CD8-positive, alpha-beta T cell (primary cell): ENCODE measurements at regions of chr3 and their contacts with region 1.

Region 1: DNA sequence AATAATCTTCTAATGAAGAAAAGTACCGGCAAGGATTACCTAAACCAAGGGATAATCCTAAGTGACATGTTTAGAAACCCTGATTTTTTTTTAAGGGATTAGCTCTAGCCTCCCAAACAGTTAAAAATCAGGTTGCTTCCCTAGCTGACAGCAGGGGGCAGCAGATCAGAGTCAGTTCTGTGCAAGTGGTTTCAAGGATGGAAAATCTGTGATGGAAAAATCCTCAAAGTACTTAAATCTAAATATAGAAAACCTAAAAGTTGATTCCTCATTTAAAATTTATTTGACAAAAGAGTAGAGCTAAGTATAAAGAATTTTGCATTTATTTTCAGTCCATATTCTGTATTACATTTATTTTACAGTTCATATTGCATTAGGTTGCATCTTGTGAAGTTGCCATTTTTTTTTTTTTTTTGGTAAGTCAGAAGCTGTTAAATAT is 107.6 kb downstream of the PEX5L start:
- DNase-seq: peak in 6 of 9 experiments; percentile 11 to 54 (median 41)
- ATAC-seq: no peak
- H3K4me3 ChIP-seq: no peak overlapping the region
- H3K4me3 Mint-ChIP-seq: no peak overlapping the region
- H3K27ac ChIP-seq: no peak overlapping the region
- H3K27ac Mint-ChIP-seq: no peak overlapping the region
- H3K4me1 ChIP-seq: no peaks in the 10 kb centered on the region
- H3K4me1 Mint-ChIP-seq: peaks cover 3% of the 10 kb centered on the region
- H3K27me3 ChIP-seq: no peaks in the 10 kb centered on the region
- H3K27me3 Mint-ChIP-seq: peaks cover 3% of the 10 kb centered on the region
- CTCF ChIP-seq: peak; percentile 61

Region 2: GRCh38 chr3:179898024-179898423 is 31.1 kb before region 1 on chr3:
- CTCF ChIA-PET with region 1: interaction called, 10 read pairs
- POLR2A ChIA-PET with region 1: no interaction called
- intact Hi-C with region 1: no loop called
- DNase-seq: peak in 2 of 9 experiments; percentile 14 to 45
- ATAC-seq: no peak
- H3K4me3 ChIP-seq: no peak overlapping the region
- H3K4me3 Mint-ChIP-seq: no peak overlapping the region
- H3K27ac ChIP-seq: no peak overlapping the region
- H3K27ac Mint-ChIP-seq: no peak overlapping the region
- H3K4me1 ChIP-seq: no peaks in the 10 kb centered on the region
- H3K4me1 Mint-ChIP-seq: no peaks in the 10 kb centered on the region
- H3K27me3 ChIP-seq: no peaks in the 10 kb centered on the region
- H3K27me3 Mint-ChIP-seq: peaks cover 10% of the 10 kb centered on the region
- CTCF ChIP-seq: no peak

Region 3: DNA sequence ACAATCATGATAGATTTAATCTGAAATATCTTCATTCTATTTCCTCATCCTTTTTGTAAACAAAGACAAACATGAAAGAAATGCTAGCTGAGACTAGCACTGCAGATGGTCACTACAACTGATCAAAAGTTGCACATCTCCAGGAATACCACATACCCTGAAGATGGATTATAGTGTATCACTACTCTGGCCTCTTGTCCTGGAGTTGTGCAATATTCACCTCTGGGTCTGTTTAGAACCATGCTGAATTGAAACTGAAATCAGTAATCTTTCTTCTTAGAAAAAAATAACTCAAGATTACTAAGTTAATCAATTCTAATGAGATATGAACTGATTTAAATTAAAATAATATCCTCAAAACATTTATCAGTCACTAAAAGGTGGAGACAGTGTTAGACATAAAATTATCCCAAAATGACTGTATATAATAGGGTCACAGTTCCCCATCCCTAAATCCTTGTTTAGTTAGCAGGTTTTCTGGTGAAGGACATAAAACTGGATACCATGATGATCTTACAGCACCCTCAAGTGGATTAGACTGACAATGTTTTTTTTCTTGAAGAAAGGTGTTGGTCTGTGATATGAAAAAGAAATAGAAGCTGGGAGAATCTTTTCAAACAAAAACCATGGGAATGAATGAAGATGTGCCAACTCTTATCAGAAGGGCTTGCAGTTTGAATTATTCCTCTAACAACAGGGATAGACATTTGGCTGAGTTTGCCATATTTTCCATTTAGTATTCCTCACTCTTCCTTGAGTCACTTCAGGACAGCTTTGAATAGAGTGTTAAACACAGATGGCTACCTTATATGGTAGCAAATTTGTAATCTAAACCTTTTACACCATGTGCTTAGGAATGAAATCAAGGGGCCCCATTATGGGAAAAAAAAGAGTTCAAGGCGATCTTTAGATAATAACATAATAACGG is 665.8 kb after region 1 on chr3:
- CTCF ChIA-PET with region 1: interaction called, 6 read pairs
- POLR2A ChIA-PET with region 1: no interaction called
- intact Hi-C with region 1: loop called (anchors 5 kb)
- DNase-seq: no peak
- ATAC-seq: no peak
- H3K4me3 ChIP-seq: no peak overlapping the region
- H3K4me3 Mint-ChIP-seq: no peak overlapping the region
- H3K27ac ChIP-seq: no peak overlapping the region
- H3K27ac Mint-ChIP-seq: no peak overlapping the region
- H3K4me1 ChIP-seq: no peaks in the 10 kb centered on the region
- H3K4me1 Mint-ChIP-seq: no peaks in the 10 kb centered on the region
- H3K27me3 ChIP-seq: peaks cover 0 to 9% of the 10 kb centered on the region in 2 experiments
- H3K27me3 Mint-ChIP-seq: peaks cover 45% of the 10 kb centered on the region
- CTCF ChIP-seq: no peak

Region 4: DNA sequence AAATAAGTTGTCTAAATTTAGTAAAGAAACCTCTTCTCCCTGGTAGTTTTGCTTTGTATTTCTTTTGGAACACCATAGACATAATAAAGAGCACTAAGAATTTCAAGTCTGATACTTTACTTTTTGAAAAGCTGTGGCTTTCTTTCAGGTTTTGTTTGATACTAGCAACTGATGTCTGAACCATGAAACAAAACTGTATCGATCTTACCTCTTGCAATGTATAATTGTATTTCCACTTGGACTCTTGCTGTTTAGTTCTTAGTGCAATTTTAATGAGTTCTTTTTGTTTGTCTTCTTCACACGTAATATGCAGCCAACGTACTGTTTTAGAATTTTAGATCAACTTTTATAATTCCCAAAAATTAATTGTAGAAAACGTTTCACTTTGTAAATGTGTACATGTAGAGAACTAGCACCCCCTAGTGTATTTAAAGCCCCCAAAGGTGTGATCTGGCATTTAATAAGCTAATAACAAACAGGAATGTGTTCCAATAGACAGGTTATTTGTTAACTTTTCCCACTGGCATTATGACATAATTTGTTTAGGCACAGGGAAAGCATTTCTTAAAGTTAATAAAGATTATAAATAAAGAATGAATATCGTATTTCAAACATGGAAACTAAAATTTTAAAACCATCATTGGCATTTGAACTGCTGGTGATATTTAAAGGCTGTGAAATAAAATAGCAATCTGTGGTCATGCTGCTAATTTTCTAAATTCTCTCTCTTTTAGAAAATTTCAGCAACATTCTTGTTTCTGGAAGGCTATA is 1349.5 kb after region 1 on chr3:
- CTCF ChIA-PET with region 1: interaction called, 3 read pairs
- POLR2A ChIA-PET with region 1: no interaction called
- intact Hi-C with region 1: loop called in 1 of 2 experiments (anchors 5 kb)
- DNase-seq: peak in 2 of 9 experiments; percentile 4 to 12
- ATAC-seq: no peak
- H3K4me3 ChIP-seq: no peak overlapping the region
- H3K4me3 Mint-ChIP-seq: no peak overlapping the region
- H3K27ac ChIP-seq: no peak overlapping the region
- H3K27ac Mint-ChIP-seq: no peak overlapping the region
- H3K4me1 ChIP-seq: no peaks in the 10 kb centered on the region
- H3K4me1 Mint-ChIP-seq: no peaks in the 10 kb centered on the region
- H3K27me3 ChIP-seq: no peaks in the 10 kb centered on the region
- H3K27me3 Mint-ChIP-seq: peaks cover 7% of the 10 kb centered on the region
- CTCF ChIP-seq: peak; percentile 42